CD4-positive, alpha-beta memory T cell (primary cell): ENCODE measurements at regions of chr1 and their contacts with region 1.

Region 1: DNA sequence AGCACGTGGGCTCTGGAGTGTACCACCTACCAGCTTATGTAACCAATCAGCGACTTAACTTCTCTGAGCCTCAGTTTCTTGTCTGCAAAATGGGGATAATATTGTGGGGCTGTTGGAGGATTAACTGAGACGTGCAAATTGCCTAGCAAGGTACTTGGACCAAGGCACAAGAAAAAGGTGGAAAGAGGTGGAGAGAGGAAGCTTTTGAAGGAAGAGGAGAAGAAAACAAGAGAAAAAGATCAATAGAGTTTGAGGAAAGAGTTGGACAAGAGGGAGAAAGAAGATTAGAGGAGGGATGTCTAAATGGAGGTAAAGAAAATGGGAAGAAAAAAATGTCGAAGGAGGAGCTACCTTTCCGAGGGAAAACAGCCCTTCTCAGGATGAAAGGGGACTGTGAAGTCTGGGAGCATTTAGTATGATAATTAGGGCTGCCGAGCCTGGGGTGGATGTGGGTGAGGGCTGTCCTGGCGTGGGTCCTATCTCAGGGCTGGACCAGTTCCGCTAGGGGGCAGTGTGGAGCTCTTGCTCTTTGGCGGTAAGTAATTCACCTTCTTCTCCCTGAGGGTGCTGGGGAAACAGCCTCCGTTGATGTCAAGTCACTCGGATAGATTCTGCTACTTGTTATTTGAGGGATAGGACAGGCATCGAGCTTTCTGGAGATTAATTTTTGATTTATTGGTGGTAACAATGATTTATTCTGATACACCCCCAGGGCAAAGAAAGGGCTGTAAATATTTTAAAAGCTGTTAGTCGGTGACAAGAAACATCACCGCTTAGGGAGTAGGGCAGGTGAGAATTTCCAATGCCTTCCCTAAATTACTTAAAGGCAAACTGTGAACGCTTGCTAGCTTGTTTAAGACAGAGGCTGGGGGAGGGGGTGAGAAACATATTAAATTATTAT is 79.0 kb upstream of the NFASC start:
- DNase-seq: peak; percentile 67 to 73 (median 69)
- H3K4me3 ChIP-seq: no peak overlapping the region
- H3K4me3 Mint-ChIP-seq: no peak overlapping the region
- H3K27ac ChIP-seq: no peak overlapping the region
- H3K27ac Mint-ChIP-seq: no peak overlapping the region
- H3K4me1 ChIP-seq: no peaks in the 10 kb centered on the region
- H3K4me1 Mint-ChIP-seq: peaks cover 0 to 5% (median 0%) of the 10 kb centered on the region in 4 donors
- H3K27me3 ChIP-seq: peaks cover 4% of the 10 kb centered on the region
- H3K27me3 Mint-ChIP-seq: peaks cover 30 to 32% of the 10 kb centered on the region in 2 donors

Region 2: GRCh38 chr1:204814181-204814884 is 22.6 kb after region 1 on chr1:
- CTCF ChIA-PET with region 1: interaction called, 166 read pairs
- POLR2A ChIA-PET with region 1: no interaction called
- intact Hi-C with region 1: no loop called
- DNase-seq: no peak
- H3K4me3 ChIP-seq: no peak overlapping the region
- H3K4me3 Mint-ChIP-seq: no peak overlapping the region
- H3K27ac ChIP-seq: no peak overlapping the region
- H3K27ac Mint-ChIP-seq: no peak overlapping the region
- H3K4me1 ChIP-seq: no peaks in the 10 kb centered on the region
- H3K4me1 Mint-ChIP-seq: no peaks in the 10 kb centered on the region
- H3K27me3 ChIP-seq: no peaks in the 10 kb centered on the region
- H3K27me3 Mint-ChIP-seq: peaks cover 16 to 21% of the 10 kb centered on the region in 2 donors